ENCODE measurements at regions of chr17 and their contacts with region 1.

Region 1: GRCh38 chr17:54172096-54172984 is 349.6 kb downstream of the KIF2B start:
- DNase-seq: peak; percentile 44
- H3K4me3 ChIP-seq: no peak overlapping the region
- H3K27ac ChIP-seq: no peak overlapping the region
- H3K4me1 ChIP-seq: no peaks in the 10 kb centered on the region
- H3K27me3 ChIP-seq: no peaks in the 10 kb centered on the region
- CTCF ChIP-seq: peak; percentile 73 to 80

Region 2: GRCh38 chr17:52383493-52384100 is 1788.7 kb before region 1 on chr17:
- CTCF ChIA-PET with region 1: no interaction called
- dilution Hi-C with region 1: no loop called
- in situ Hi-C with region 1: no loop called
- intact Hi-C with region 1: loop called (anchors 10 kb)
- DNase-seq: peak; percentile 64
- H3K4me3 ChIP-seq: no peak overlapping the region
- H3K27ac ChIP-seq: no peak overlapping the region
- H3K4me1 ChIP-seq: no peaks in the 10 kb centered on the region
- H3K27me3 ChIP-seq: no peaks in the 10 kb centered on the region
- CTCF ChIP-seq: peak; percentile 77 to 88

Region 3: DNA sequence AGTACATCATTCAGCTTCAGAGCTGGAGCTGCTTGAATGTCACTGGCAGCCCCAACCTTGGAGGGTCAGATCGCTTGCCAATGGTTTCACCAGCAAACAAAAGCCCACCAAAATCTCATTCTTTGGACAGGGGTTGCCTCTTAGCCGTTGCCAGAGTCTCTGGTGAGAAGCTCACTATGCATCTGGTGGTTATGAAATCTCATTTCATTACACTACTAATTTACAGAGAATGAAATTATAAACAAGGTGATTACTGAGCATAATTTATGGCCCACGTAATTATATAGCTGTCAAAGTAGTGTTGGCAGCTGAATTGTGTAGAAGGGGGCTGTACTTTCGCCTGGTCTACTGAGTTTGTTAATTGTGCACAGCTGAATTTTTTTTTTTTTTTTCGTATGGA is 1038.5 kb before region 1 on chr17:
- CTCF ChIA-PET with region 1: no interaction called
- dilution Hi-C with region 1: no loop called
- in situ Hi-C with region 1: no loop called
- intact Hi-C with region 1: no loop called
- DNase-seq: no peak
- H3K4me3 ChIP-seq: no peak overlapping the region
- H3K27ac ChIP-seq: no peak overlapping the region
- H3K4me1 ChIP-seq: no peaks in the 10 kb centered on the region
- H3K27me3 ChIP-seq: no peaks in the 10 kb centered on the region
- CTCF ChIP-seq: no peak

Region 4: DNA sequence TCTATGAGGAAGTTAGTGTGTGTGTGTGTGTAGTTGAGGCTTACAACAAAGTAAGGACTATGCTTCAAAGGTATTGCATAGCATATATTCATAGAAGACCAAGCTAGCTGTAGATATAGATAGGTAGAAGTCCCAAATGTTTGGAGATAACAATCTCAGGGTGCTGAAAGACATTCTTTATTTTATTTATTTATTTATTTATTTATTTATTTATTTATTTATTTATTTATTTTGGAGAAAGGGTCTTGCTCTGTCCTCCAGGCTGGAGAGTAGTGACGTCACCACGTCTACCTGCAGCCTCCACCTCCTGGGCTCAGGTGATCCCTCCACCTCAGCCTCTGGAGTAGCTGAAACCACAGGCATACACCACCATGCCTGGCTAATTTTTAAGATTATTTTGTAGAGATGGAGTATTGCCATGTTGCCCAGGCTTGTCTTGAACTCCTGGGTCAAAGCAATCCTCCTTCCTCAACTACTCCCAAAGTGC is 634.2 kb before region 1 on chr17:
- CTCF ChIA-PET with region 1: no interaction called
- dilution Hi-C with region 1: no loop called
- in situ Hi-C with region 1: no loop called
- intact Hi-C with region 1: no loop called
- DNase-seq: no peak
- H3K4me3 ChIP-seq: no peak overlapping the region
- H3K27ac ChIP-seq: no peak overlapping the region
- H3K4me1 ChIP-seq: no peaks in the 10 kb centered on the region
- H3K27me3 ChIP-seq: no peaks in the 10 kb centered on the region
- CTCF ChIP-seq: no peak

Region 5: GRCh38 chr17:53626286-53626685 is 546.1 kb before region 1 on chr17:
- CTCF ChIA-PET with region 1: no interaction called
- dilution Hi-C with region 1: no loop called
- in situ Hi-C with region 1: no loop called
- intact Hi-C with region 1: loop called (anchors 5 kb)
- DNase-seq: peak; percentile 73
- H3K4me3 ChIP-seq: no peak overlapping the region
- H3K27ac ChIP-seq: no peak overlapping the region
- H3K4me1 ChIP-seq: peaks cover 24% of the 10 kb centered on the region
- H3K27me3 ChIP-seq: no peaks in the 10 kb centered on the region
- CTCF ChIP-seq: no peak

Region 6: GRCh38 chr17:53707566-53707965 is 464.8 kb before region 1 on chr17:
- CTCF ChIA-PET with region 1: no interaction called
- dilution Hi-C with region 1: no loop called
- in situ Hi-C with region 1: no loop called
- intact Hi-C with region 1: loop called (anchors 5 kb)
- DNase-seq: no peak
- H3K4me3 ChIP-seq: no peak overlapping the region
- H3K27ac ChIP-seq: no peak overlapping the region
- H3K4me1 ChIP-seq: no peaks in the 10 kb centered on the region
- H3K27me3 ChIP-seq: no peaks in the 10 kb centered on the region
- CTCF ChIP-seq: no peak

Region 7: GRCh38 chr17:54426296-54426886 is 254.1 kb after region 1 on chr17:
- CTCF ChIA-PET with region 1: no interaction called
- dilution Hi-C with region 1: no loop called
- in situ Hi-C with region 1: no loop called
- intact Hi-C with region 1: loop called (anchors 2 kb)
- DNase-seq: peak; percentile 46
- H3K4me3 ChIP-seq: no peak overlapping the region
- H3K27ac ChIP-seq: no peak overlapping the region
- H3K4me1 ChIP-seq: no peaks in the 10 kb centered on the region
- H3K27me3 ChIP-seq: no peaks in the 10 kb centered on the region
- CTCF ChIP-seq: peak; percentile 82 to 83

Region 8: GRCh38 chr17:54891176-54891821 is 719.0 kb after region 1 on chr17:
- CTCF ChIA-PET with region 1: interaction called, 5 read pairs
- dilution Hi-C with region 1: no loop called
- in situ Hi-C with region 1: loop called in 1 of 2 experiments (anchors 25 kb)
- intact Hi-C with region 1: loop called (anchors 2 kb)
- DNase-seq: peak; percentile 64
- H3K4me3 ChIP-seq: no peak overlapping the region
- H3K27ac ChIP-seq: no peak overlapping the region
- H3K4me1 ChIP-seq: peaks cover 3% of the 10 kb centered on the region
- H3K27me3 ChIP-seq: no peaks in the 10 kb centered on the region
- CTCF ChIP-seq: peak in 1 of 2 donors; percentile 51

Measured in mammary epithelial cell (primary cell).